ENCODE measurements at regions of chr9 and their contacts with region 1.

Region 1: DNA sequence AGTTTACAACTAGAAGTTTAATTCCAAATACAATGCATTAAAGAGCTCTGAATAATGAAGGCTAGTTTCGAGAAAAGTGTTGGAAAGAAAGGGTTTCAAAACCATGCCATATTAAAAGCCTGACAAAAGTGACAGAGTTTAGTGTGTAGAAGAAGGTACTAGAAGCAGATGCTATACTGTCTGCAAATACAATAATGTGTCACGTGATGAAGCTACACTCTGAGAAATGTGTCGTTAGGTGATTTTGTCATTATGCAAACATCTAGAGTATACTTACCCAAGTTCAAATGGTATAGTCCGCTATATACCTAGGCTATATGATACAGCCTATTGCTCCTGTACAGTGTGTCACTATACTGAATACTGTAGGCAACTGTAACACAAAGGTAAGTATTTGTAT is 494.1 kb downstream of the TLE1 start:
- DNase-seq: no peak
- ATAC-seq: no peak

Region 2: DNA sequence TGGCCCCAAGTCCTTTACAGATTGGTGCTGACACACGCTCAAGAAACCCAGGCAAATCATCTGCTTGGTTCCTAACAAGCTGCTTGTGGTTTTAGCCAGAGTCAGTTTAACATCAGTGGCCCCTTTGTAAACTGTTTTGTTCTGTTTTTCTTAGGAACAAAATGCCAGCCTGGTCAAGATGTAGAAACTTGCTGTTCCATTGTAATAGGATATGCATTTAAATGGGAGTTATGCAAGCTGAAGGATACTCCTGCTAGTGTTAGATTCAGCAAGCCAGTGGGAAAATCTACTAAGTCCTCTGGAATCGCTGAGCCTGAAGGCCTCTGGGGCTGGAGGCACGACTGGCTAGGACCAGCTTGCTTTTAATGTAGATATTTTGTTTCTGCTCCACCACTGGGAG is 1232.4 kb before region 1 on chr9:
- intact Hi-C with region 1: loop called (anchors 5 kb)
- DNase-seq: no peak
- ATAC-seq: no peak

Region 3: GRCh38 chr9:80699511-80699998 is 495.7 kb before region 1 on chr9:
- intact Hi-C with region 1: no loop called
- DNase-seq: no peak
- ATAC-seq: no peak

Region 4: DNA sequence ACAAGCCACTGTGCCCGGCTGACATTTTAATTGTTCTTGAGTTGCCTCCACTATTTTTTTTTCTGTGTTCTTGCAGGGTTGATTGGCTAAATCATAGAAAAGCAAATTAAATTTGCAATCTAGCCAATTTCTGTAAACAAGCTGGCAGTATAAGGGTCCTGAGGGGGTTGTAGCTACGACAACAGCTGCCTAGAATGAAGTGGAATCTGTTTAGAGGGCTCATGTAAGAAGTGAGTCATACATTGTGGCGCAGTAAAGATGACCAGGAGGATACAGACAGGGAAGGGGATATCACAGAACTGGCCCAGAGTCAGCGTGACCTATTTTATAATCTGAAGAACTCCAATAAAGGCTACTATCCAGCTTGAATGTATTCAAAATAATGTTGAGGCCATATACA is 576.4 kb after region 1 on chr9:
- intact Hi-C with region 1: no loop called
- DNase-seq: no peak
- ATAC-seq: no peak

Measured in sciatic nerve (tissue), 2 donors.